Naive thymus-derived CD4-positive, alpha-beta T cell (primary cell): ENCODE measurements at regions of chr2 and their contacts with region 1.

Region 1: GRCh38 chr2:112749755-112750559 is 14.5 kb downstream of the CKAP2L start:
- DNase-seq: peak; percentile 50 to 85 (median 69)
- ATAC-seq: peak; percentile 97
- H3K4me3 ChIP-seq: no peak overlapping the region
- H3K4me3 Mint-ChIP-seq: peak overlapping the region in 7 of 10 donors; percentile 7 to 76 (median 21)
- H3K27ac ChIP-seq: no peak overlapping the region
- H3K27ac Mint-ChIP-seq: peak overlapping the region in 3 of 9 donors; percentile 6 to 90 (median 54)
- H3K4me1 ChIP-seq: peaks cover 0 to 4% of the 10 kb centered on the region in 2 donors
- H3K4me1 Mint-ChIP-seq: peaks cover 6 to 49% (median 9%) of the 10 kb centered on the region in 7 donors
- H3K27me3 ChIP-seq: no peaks in the 10 kb centered on the region
- H3K27me3 Mint-ChIP-seq: no peaks in the 10 kb centered on the region

Region 2: DNA sequence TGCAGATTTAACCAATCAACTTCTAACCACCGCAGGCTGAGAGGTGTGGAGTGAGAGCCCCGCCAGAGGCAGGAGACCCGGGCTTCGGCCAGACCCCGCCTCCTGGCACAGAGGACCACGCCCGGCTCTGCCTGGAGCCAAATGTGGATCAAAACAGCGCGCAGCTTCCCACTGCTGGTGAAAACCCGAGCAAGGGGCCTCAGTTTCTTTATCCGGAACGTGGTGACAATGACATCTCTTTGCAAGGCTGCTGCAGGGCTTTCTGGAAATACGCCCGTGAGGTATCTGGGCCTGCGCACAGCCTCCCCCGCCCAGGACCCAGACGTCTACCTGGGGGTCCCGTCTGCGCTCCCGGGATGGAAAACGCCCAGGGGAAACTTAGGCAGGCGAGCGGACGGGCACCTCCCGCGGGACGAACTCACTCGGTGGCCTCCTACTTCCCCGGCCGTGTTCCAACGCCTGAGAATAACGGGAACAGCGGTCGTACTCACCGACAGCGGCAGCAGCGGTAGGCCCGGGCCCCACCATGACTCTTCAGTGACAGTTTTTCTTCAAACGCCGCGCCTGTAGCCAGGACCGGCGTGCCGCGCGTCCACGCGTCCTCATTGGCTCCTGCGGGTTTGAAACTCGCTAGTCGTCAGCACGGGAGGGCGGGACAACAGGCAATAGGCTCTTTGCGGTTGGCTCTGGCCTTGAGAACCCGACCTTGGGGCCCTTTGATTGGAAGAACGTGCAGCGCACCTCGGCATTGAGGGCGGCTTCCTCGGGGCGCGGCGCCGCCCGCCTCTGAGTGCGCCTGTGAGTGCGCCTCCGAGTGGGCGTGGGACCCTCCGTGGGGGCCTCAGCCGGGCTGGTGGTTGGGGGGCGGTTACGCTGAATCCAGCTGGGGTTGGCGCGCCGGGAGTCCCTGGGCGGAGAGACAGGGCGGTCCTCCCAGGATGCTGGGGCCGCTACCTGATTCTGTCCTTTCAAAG is 14.4 kb after region 1 on chr2 and contains the start of gene CKAP2L:
- CTCF ChIA-PET with region 1: interaction called, 3 read pairs
- POLR2A ChIA-PET with region 1: interaction called, 4 read pairs
- intact Hi-C with region 1: loop called in 1 of 2 experiments (anchors 1 kb)
- DNase-seq: peak; percentile 85 to 97 (median 94)
- ATAC-seq: peak; percentile 99
- H3K4me3 ChIP-seq: peak within 1 kb of the TSS; percentile 82
- H3K4me3 Mint-ChIP-seq: peak within 1 kb of the TSS; percentile 90 to 97 (median 92)
- H3K27ac ChIP-seq: peak within 1 kb of the TSS; percentile 65
- H3K27ac Mint-ChIP-seq: peak within 1 kb of the TSS; percentile 29 to 95 (median 71)
- H3K4me1 ChIP-seq: peaks cover 12 to 16% of the 10 kb centered on the region in 2 donors
- H3K4me1 Mint-ChIP-seq: peaks cover 15 to 61% (median 30%) of the 10 kb centered on the region in 7 donors
- H3K27me3 ChIP-seq: no peaks in the 10 kb centered on the region
- H3K27me3 Mint-ChIP-seq: no peaks in the 10 kb centered on the region
- total RNA-seq, gene CKAP2L: 0.69 to 36.2 (median 2.4) TPM in 3 of 5 experiments, not detected in the others

Region 3: DNA sequence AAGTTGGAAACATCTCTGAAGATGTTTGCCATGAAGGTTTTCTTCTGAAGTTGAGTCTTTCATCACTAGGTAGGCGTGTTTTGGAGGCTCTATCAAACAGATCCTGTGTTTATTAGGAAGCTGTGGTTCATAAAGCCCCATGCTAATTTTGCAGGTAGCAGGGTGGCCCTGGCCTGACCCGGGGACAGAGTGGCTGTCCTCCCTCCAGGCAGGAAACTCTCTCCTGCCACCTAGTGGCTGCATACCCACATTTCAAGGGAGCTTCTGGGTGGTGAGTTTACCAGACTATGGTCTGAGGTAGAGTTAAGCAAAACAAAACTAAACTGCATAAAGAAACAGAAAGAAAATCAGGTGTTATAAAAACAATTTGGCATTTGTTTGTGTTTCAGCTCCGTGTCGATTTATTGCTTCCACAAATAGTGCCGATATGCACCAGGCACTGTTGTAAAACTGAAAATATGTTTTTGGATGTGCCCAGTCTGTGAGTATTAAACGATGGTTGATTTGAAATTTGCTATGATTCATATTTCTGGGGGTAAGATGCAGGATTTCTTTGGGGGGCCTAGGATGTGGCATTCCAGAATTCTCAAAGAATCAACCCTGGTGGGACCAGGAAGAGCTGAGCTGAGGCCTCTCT is 135.0 kb after region 1 on chr2:
- CTCF ChIA-PET with region 1: interaction called, 41 read pairs
- POLR2A ChIA-PET with region 1: no interaction called
- intact Hi-C with region 1: loop called in 1 of 2 experiments (anchors 1 kb)
- DNase-seq: peak; percentile 8 to 77 (median 50)
- ATAC-seq: peak; percentile 83
- H3K4me3 ChIP-seq: no peak overlapping the region
- H3K4me3 Mint-ChIP-seq: peak overlapping the region in 1 of 10 donors; percentile 61
- H3K27ac ChIP-seq: no peak overlapping the region
- H3K27ac Mint-ChIP-seq: peak overlapping the region in 2 of 9 donors; percentile 45 to 81
- H3K4me1 ChIP-seq: no peaks in the 10 kb centered on the region
- H3K4me1 Mint-ChIP-seq: peaks cover 0 to 31% (median 10%) of the 10 kb centered on the region in 7 donors
- H3K27me3 ChIP-seq: no peaks in the 10 kb centered on the region
- H3K27me3 Mint-ChIP-seq: no peaks in the 10 kb centered on the region

Region 4: DNA sequence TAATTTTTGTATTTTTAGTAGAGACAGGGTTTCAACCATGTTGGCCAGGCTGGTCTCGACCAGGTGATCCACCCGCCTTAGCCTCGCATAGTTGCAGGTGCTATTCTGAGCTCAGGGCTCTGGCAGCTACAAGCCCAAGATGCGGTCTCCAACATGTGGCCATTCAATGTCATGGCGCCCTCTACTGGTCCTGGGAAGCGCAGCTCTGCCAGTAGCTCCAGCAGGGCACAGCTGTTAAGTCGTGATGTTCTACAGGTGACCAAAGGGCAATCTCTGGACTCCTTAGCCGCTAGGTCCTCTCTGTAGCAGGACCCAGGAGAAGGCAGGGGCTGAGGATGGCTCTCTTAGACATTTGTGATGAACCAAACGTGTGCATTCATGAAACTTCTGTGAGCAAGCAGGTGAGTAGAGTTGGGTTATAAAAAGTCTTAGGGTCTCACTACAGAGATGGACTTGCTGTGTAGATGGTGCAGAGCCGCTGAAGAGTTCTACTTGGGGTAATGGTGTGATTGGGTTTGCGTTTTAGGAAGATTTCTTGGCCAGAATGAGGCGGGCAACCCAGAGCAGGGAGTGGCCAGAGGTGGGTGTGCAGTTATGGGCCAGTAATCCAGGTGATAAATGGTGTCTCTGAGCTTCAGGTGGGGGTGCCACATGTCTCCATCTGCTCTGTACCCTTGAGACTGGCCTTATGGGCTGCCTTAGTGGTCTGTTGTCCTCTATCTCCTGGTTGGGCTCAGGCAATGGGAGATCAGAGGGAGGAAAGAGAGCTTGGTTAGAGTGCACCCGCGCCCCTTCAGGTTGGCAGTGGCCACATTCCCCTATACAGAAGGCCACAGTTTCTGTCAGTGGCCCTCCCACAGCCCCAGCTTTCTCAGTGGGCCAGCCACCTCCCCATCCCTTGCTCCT is 192.0 kb after region 1 on chr2:
- CTCF ChIA-PET with region 1: interaction called, 4 read pairs
- POLR2A ChIA-PET with region 1: no interaction called
- intact Hi-C with region 1: loop called (anchors 1 kb)
- DNase-seq: peak in 8 of 9 donors; percentile 7 to 73 (median 22)
- ATAC-seq: peak; percentile 88
- H3K4me3 ChIP-seq: no peak overlapping the region
- H3K4me3 Mint-ChIP-seq: no peak overlapping the region
- H3K27ac ChIP-seq: no peak overlapping the region
- H3K27ac Mint-ChIP-seq: peak overlapping the region in 1 of 9 donors; percentile 15
- H3K4me1 ChIP-seq: no peaks in the 10 kb centered on the region
- H3K4me1 Mint-ChIP-seq: peaks cover 0 to 4% (median 0%) of the 10 kb centered on the region in 7 donors
- H3K27me3 ChIP-seq: no peaks in the 10 kb centered on the region
- H3K27me3 Mint-ChIP-seq: peaks cover 0 to 43% (median 0%) of the 10 kb centered on the region in 5 donors

Region 5: GRCh38 chr2:112958428-112959108 is 208.6 kb after region 1 on chr2:
- CTCF ChIA-PET with region 1: interaction called, 4 read pairs
- POLR2A ChIA-PET with region 1: no interaction called
- intact Hi-C with region 1: loop called (anchors 1 kb)
- DNase-seq: peak in 6 of 9 donors; percentile 24 to 63 (median 52)
- ATAC-seq: peak; percentile 87
- H3K4me3 ChIP-seq: no peak overlapping the region
- H3K4me3 Mint-ChIP-seq: no peak overlapping the region
- H3K27ac ChIP-seq: no peak overlapping the region
- H3K27ac Mint-ChIP-seq: no peak overlapping the region
- H3K4me1 ChIP-seq: no peaks in the 10 kb centered on the region
- H3K4me1 Mint-ChIP-seq: no peaks in the 10 kb centered on the region
- H3K27me3 ChIP-seq: no peaks in the 10 kb centered on the region
- H3K27me3 Mint-ChIP-seq: peaks cover 0 to 8% (median 0%) of the 10 kb centered on the region in 5 donors